Common myeloid progenitor, CD34-positive (primary cell): ENCODE measurements at regions of chr19 and their contacts with region 1.

Region 1: GRCh38 chr19:42529248-42529764 is 1.0 kb upstream of the CEACAM1 start:
- DNase-seq: peak; percentile 52 to 69 (median 65)
- H3K4me3 ChIP-seq: peak overlapping the region in 2 of 7 experiments; percentile 48 to 67
- H3K27ac ChIP-seq: no peak overlapping the region
- H3K4me1 ChIP-seq: peaks cover 4 to 26% (median 17%) of the 10 kb centered on the region in 4 experiments
- H3K27me3 ChIP-seq: no peaks in the 10 kb centered on the region

Region 2: GRCh38 chr19:42440357-42441048 is 88.8 kb before region 1 on chr19:
- CTCF ChIA-PET with region 1: interaction called, 18 read pairs
- POLR2A ChIA-PET with region 1: no interaction called
- DNase-seq: peak; percentile 74 to 88 (median 86)
- H3K4me3 ChIP-seq: peak overlapping the region in 2 of 7 experiments; percentile 22 to 35
- H3K27ac ChIP-seq: no peak overlapping the region
- H3K4me1 ChIP-seq: peaks cover 14 to 30% (median 18%) of the 10 kb centered on the region in 4 experiments
- H3K27me3 ChIP-seq: peaks cover 0 to 2% (median 0%) of the 10 kb centered on the region in 5 experiments

Region 3: DNA sequence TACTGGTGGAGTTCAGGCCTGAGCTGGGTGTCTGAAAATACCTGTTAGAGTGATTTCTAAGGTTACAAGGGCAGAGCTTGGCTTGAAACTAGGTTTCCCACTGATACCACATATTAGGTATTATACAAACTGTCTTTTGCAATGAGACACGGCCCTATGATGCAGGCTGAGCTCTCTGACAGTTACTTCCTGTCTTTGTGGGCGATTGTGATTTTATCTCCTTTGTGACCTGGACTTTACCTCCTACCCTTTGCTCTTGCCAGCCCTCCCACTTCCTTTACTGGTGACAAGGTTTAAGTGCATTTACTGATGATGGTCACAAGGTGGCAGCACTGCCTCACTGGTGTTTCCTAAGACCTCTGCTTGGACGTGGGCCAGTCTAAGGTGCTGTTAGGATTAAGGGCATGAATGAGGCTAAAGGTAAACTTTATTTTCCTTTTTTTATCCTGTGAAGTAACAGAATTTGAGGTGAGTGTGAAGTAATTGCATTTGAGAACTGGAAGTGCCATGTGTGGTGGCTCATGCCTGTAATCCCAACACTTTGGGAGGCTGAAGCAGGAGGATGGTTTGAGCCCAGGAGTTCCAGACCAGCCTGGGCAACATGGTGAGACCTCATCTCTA is 78.9 kb before region 1 on chr19:
- CTCF ChIA-PET with region 1: interaction called, 81 read pairs
- POLR2A ChIA-PET with region 1: interaction called, 6 read pairs
- DNase-seq: peak; percentile 89 to 95 (median 91)
- H3K4me3 ChIP-seq: no peak overlapping the region
- H3K27ac ChIP-seq: no peak overlapping the region
- H3K4me1 ChIP-seq: peaks cover 0 to 26% (median 18%) of the 10 kb centered on the region in 4 experiments
- H3K27me3 ChIP-seq: no peaks in the 10 kb centered on the region

Region 4: DNA sequence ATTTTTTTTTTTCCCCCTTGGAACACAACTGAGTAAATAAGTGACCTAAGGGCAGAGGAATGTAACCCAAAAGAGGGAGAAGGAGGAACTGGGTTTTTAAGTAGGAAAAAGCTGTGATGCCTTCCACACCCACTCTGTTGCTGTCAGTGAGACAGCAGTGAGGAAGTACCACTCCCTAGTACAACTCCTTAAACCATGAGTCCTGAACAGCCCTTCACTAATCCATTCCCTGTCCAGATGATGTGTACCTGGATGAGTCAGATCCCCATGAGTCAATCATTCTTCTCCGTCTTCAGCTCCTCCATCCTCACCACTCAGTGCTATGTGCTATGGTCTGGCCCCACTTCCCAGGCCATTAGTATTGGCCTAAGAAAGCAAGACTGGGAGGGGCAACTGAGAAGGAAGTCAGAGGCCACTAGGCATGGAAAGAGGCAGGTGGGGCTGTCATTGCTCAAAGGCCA is 73.7 kb before region 1 on chr19:
- CTCF ChIA-PET with region 1: interaction called, 81 read pairs
- POLR2A ChIA-PET with region 1: interaction called, 6 read pairs
- DNase-seq: no peak
- H3K4me3 ChIP-seq: no peak overlapping the region
- H3K27ac ChIP-seq: no peak overlapping the region
- H3K4me1 ChIP-seq: peaks cover 0 to 21% (median 13%) of the 10 kb centered on the region in 4 experiments
- H3K27me3 ChIP-seq: peaks cover 0 to 2% (median 0%) of the 10 kb centered on the region in 5 experiments